ENCODE measurements at regions of chr2 and their contacts with region 1.

Region 1: DNA sequence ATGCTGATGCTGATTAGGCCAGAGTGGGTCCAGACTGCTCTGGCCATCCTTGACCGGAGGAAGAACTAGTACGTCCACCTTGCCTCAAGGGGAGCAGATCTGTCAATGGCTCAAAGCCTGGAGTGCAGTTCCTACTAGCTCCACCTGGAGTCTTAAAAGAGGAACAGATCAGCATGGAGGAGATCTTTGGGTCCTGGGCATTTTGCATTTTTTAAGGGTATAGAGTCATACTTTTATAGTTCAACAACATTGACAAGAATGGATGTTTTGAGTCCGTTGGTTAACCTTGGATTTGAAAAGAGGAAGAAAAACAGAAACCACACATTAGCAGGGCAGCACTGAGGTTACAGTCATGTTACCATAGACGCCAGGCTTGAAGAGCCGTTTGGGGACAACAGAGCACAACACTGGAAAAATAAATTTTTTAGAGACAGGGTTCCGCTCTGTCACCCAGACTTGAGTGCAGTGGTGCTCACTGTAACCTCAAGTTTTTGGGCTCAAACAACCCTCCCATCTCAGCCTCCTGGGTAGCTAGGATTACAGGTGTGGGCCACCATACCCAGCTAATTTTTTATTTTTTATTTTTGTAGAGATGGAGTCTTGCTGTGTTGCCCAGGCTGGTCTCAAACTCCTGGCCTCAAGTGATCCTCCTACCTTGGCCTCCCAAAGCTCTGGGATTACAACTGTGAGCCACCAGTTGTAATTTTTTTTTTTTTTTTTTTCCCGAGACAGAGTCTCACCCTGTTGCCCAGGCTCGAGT is 78.5 kb downstream of the PRKCE start:
- DNase-seq: peak; percentile 36
- ATAC-seq: peak; percentile 56
- H3K4me3 Mint-ChIP-seq: peak overlapping the region; percentile 59
- H3K27ac Mint-ChIP-seq: peak overlapping the region; percentile 98
- H3K4me1 Mint-ChIP-seq: peaks cover 91% of the 10 kb centered on the region
- H3K27me3 Mint-ChIP-seq: no peaks in the 10 kb centered on the region
- CTCF ChIP-seq: no peak

Region 2: GRCh38 chr2:45691171-45691999 is 38.5 kb before region 1 on chr2:
- CTCF ChIA-PET with region 1: interaction called, 8 read pairs
- POLR2A ChIA-PET with region 1: interaction called, 47 read pairs
- intact Hi-C with region 1: loop called (anchors 1 kb)
- DNase-seq: no peak
- ATAC-seq: peak; percentile 45
- H3K4me3 Mint-ChIP-seq: peak overlapping the region; percentile 64
- H3K27ac Mint-ChIP-seq: peak overlapping the region; percentile 70
- H3K4me1 Mint-ChIP-seq: peaks cover 54% of the 10 kb centered on the region
- H3K27me3 Mint-ChIP-seq: no peaks in the 10 kb centered on the region
- CTCF ChIP-seq: no peak

Region 3: DNA sequence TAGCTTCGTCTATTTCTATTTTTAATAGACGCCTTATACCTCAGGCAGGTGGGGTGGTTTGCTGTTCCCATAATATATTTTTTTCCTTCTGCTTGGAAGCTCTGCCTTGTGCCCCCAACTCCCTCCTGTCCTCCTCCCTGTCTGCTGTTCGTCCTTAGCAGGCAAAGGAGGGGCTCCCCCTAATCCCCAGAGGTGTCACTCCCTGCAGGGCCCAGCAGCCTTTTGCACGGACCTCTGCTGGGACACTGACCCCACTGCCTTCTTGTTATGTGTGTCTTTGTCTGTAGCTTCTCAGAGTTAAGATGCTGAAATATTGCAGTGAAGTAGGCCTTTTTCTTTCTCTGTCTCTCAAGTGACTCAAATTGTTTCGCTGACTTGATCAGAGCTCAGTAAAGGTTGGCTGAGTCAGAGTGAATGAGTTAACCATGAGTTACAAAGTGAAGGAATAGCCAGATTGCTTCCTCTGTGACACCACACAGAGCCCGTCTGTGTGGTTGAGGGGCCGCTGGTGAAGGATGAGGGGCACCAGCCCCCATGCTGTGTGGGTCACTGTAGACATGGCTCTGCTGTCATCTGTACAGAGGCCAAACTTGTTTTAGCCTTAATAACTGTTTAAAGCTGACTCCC is 30.8 kb before region 1 on chr2:
- CTCF ChIA-PET with region 1: interaction called, 3 read pairs
- POLR2A ChIA-PET with region 1: interaction called, 47 read pairs
- intact Hi-C with region 1: loop called (anchors 1 kb)
- DNase-seq: no peak
- ATAC-seq: peak; percentile 61
- H3K4me3 Mint-ChIP-seq: peak overlapping the region; percentile 57
- H3K27ac Mint-ChIP-seq: peak overlapping the region; percentile 89
- H3K4me1 Mint-ChIP-seq: peaks cover 61% of the 10 kb centered on the region
- H3K27me3 Mint-ChIP-seq: no peaks in the 10 kb centered on the region
- CTCF ChIP-seq: no peak

Region 4: DNA sequence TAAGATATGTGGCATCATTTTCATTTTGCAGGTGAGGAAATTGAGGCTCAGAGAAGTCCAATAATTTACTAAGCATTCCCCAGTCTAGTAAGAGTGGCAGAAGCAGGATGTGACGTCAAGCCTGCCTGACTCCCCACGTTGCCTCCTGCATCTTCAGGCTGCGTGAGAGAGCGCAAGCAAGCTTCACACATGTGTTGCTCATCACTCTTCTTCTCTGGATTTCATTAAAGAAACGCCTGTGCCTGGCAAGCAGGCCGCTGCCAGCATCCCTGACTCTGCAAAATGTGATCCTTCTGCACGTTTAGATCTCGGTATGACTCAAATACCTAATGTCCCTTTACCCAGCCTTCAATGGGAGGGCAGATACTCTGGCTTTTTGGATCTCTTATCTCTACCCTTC is 18.3 kb after region 1 on chr2:
- CTCF ChIA-PET with region 1: no interaction called
- POLR2A ChIA-PET with region 1: interaction called, 5 read pairs
- intact Hi-C with region 1: loop called (anchors 2 kb)
- DNase-seq: no peak
- ATAC-seq: no peak
- H3K4me3 Mint-ChIP-seq: no peak overlapping the region
- H3K27ac Mint-ChIP-seq: no peak overlapping the region
- H3K4me1 Mint-ChIP-seq: peaks cover 64% of the 10 kb centered on the region
- H3K27me3 Mint-ChIP-seq: no peaks in the 10 kb centered on the region
- CTCF ChIP-seq: no peak

Region 5: GRCh38 chr2:45778720-45779171 is 48.8 kb after region 1 on chr2:
- CTCF ChIA-PET with region 1: interaction called, 28 read pairs
- POLR2A ChIA-PET with region 1: interaction called, 15 read pairs
- intact Hi-C with region 1: loop called (anchors 1 kb)
- DNase-seq: peak; percentile 35
- ATAC-seq: peak; percentile 83
- H3K4me3 Mint-ChIP-seq: peak overlapping the region; percentile 44
- H3K27ac Mint-ChIP-seq: peak overlapping the region; percentile 39
- H3K4me1 Mint-ChIP-seq: peaks cover 76% of the 10 kb centered on the region
- H3K27me3 Mint-ChIP-seq: no peaks in the 10 kb centered on the region
- CTCF ChIP-seq: no peak

Region 6: GRCh38 chr2:45889053-45889452 is 159.1 kb after region 1 on chr2:
- CTCF ChIA-PET with region 1: interaction called, 3 read pairs
- POLR2A ChIA-PET with region 1: interaction called, 4 read pairs
- intact Hi-C with region 1: loop called (anchors 1 kb)
- DNase-seq: no peak
- ATAC-seq: peak; percentile 79
- H3K4me3 Mint-ChIP-seq: peak overlapping the region; percentile 36
- H3K27ac Mint-ChIP-seq: peak overlapping the region; percentile 51
- H3K4me1 Mint-ChIP-seq: peaks cover 90% of the 10 kb centered on the region
- H3K27me3 Mint-ChIP-seq: no peaks in the 10 kb centered on the region
- CTCF ChIP-seq: no peak

Region 7: DNA sequence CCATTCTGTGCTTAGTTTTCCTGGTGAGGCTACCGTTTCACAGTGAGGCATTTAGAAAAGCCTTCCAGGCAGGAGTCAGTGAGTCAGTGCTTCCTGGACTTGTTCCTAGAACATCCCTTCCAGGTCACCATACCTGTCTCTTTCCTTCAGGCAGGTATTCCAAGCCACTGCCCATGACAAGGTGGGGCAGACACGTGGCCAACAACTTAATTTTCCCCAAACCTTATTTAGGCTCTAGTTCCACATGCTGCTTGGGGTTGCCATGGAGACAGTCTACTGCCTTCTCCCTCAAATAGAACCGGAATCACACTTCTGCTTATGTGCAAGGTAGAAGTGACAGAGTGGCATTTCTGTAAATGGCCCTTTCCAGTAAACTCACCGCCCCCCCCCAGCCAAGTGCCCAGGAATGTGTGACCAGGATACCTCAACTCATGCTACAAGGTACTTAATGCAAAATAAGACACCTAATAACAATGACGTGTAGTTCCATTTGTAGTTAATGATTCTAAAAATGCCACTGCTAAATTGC is 179.8 kb after region 1 on chr2:
- CTCF ChIA-PET with region 1: no interaction called
- POLR2A ChIA-PET with region 1: no interaction called
- intact Hi-C with region 1: loop called (anchors 5 kb)
- DNase-seq: no peak
- ATAC-seq: peak; percentile 84
- H3K4me3 Mint-ChIP-seq: peak overlapping the region; percentile 53
- H3K27ac Mint-ChIP-seq: peak overlapping the region; percentile 73
- H3K4me1 Mint-ChIP-seq: peaks cover 70% of the 10 kb centered on the region
- H3K27me3 Mint-ChIP-seq: no peaks in the 10 kb centered on the region
- CTCF ChIP-seq: no peak